Posterior cingulate gyrus (tissue), 11 donors: ENCODE measurements at regions of chr19 and their contacts with region 1.

Region 1: DNA sequence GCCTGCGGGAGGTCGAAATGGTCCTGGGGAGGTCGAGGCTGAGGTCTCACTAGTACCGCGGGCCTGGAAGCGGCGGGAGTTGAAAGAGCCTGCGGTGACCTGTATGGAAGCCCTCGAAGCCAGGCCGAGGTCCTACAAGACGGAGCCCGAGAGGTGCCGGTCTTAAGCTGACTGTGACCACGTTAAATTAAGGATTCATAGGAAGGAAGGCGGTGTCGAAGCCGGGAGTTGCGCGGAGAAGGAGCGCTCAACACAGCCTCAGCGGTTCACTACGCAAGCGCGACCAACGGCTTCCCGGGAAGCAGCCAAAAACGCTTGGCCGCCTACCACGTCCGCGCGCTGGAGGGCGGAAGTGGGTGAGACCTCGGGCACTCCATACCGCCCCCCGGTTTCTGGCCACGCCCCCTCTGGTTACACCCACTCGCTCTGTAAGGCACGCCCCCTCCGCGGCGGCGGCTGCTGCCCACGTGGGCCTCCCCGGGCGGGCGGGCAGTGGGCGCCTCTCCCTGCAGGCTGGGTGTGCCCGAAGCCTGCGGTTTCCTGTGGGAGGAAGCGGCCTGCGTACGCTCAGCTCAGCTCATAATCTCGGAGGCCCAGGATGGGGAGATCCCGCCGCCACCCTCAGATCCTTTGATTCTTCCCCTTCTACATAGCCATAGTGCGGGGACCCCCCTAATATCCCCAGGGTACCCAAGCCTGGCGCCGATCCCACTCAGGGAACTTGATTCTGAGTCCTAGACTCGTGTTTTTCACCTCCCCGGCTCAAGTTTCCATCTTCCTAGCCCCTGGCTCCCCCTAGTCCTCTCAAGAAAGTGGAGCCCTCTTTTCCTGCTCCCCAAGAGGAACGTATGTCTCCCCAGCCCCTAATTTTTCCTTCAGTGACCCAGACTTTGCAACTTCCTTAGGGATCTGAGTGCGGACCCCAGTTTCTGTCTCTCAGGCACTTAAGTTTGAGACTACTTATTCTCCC is 3.4 kb upstream of the EMP3 start:
- DNase-seq: peak; percentile 93 to 100 (median 96)

Region 2: DNA sequence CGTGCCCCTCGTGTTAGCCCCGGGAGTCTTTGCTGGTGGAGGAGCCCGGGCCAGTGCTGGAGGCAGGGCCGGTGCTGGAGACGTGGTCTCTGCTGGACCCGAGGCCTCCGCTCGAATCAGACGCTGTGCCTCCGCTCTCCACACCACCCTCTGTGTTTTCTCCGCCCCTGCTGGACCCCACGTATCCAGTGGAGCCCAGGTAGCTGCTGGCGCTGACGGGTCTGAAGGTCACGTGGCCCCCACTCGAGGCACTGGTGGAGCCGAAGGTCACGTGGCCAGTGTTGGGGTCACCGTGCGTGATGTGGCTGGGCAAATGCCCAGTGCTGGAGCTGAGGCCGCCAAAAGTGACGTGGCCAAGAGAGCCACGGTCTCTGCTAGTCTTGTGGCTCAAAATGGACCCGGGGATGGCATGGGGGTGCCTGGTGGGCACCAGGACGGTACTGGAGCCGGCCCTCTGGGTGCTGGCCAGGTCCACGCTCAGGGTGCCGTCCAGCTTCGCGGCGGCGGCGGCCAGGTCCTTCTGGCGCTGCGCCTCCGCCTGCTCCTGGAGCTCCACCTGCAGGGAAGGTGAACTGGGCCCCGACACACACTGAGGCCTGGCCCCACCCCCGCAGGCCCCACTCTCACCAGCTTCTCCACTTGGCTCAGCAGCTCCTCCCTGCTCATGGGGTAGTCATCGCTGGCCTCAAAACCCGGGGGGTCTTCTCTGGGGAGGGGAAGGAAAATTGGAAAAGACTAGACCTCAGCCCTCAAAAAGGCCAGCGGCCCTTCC is 24.8 kb before region 1 on chr19:
- intact Hi-C with region 1: no loop called
- DNase-seq: peak in 2 of 10 donors; percentile 35 to 83

Region 3: DNA sequence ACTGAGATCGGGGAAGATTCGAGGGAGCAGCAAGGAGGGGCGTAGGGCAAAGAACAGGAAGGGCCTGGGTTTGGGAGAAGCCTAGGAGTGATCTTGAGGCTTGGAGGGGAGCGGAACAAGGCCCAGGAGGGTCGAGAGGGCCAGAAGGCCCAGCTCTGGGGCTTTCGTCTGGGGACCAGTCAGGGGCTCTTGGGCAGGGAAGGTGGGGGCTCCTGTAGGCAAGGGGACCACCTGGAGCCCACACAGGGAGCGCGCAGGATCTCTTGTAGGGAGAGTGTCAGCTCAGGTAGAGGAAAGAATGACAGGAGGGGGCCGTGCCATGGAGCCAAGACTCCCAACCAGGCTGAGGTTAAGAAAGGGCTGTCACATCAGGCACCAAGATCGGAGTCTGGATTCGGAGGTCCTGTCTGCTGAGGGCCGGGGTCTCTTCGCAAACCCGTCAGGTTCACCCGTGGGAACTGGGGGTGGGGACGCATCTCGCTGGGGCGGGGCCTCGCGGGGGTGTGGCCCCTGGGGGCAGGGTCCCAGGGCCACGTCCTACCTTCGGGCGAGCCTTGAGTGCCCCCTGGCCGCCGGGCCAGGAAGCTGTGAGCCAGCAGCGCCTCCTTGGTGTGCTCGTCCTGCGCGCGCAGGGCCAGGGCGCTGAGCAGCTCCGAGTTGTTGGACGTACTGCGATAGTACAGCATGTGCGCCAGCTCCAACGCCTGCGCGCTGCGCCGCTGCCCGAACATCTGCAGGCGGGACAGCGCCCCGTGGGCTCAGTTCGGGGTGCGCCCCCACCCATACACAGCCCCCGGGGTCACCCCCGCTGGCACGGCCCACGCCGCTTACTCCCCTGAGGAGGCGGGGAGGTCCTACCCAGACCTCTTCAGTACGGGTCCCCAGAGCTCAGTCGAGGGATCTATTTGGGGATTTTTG is 11.8 kb after region 1 on chr19:
- intact Hi-C with region 1: loop called (anchors 2 kb)
- DNase-seq: peak; percentile 54 to 96 (median 72)

Region 4: GRCh38 chr19:48363810-48364563 is 42.1 kb after region 1 on chr19 and contains the starts of genes SYNGR4 and TMEM143:
- intact Hi-C with region 1: loop called (anchors 5 kb)
- DNase-seq: peak; percentile 97 to 100 (median 98)

Region 5: DNA sequence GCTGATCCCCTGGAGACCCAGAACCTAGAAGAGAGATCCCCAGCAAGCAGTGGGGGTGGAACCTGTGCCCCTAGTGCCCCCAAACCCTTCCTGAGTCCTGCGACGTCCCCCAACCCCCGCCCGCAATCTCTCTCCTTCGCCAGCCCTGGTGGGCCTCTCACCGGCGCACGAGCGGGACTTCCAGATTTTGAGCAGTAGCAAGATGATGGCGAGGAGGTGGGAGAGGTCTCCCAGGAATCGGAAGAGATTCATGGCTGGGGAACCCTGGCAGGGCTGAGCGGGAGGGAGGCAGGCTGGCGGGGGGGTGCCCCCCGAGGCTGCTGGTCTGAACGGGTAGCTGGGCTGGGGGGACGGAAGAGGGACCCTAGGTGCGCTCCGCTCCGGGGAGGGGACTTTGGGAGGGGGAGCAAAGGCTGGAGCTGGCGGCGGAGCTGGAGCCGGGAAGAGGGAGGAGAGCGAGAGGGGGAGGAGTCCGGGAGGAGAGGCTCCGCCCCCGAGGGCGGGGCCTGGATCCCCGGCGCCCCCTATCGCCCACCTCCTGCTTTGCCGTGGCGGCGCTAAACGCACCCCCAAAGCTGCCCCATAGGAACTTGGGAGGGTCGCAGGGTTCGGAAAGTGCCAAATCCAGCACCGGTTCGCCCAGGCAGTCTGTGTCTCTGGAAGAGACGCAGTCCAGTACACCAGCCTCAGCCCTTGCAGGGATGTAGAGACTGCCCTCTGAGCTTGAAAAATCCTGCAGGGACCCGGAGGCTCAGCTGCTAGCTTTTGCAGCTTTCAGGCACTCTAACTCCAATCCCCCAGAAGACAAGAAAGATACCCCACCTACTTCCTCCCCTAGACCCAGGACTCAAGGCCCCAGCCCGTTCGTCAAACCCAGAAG is 69.4 kb after region 1 on chr19 and contains the start of gene KDELR1:
- intact Hi-C with region 1: loop called (anchors 5 kb)
- DNase-seq: peak; percentile 74 to 98 (median 85)